ENCODE measurements at regions of chr1 and their contacts with region 1.

Region 1: DNA sequence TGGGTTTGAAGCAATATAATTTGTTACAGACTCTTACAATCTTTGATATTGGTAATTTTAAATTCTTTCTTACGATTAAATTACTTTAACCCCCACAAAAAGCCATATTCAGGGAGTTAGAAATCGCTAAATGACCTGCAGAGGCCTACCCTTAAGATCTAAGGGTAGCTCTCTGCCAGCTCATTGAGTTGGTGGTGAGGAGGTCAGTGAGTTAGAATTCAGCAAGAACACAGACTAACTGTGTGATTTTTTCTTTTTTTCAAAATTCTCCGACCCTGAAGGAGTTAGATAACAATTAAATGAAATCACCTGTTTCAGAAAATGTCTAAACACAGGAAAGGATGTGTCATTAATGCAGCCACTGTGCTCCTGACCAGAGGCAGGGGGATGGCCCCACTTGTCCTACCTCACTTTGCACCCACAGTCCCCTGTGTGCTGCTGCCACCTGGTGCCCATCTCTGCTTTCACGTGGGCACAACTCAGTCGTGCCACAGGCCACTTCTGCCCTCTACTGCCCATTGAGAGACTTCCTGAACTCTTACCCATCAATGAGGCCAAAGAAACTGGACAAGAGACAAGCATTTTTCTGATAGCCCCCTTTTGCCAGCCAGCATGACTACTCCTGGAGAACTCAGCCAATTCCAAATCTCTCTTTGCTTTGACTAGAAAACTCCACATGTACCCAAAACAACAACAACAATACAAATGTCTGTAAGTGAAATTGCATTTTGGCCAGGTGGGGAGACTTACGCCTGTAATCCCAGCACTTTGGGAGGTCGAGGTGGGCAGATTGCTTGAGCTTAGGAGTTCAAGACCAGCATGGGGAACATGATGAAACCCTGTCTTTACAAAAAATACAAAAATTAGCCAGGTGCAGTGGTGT is 8.4 kb downstream of the CFAP45 start:
- DNase-seq: peak; percentile 89
- H3K4me3 ChIP-seq: no peak overlapping the region
- H3K27ac ChIP-seq: no peak overlapping the region
- H3K4me1 ChIP-seq: no peaks in the 10 kb centered on the region
- H3K27me3 ChIP-seq: no peaks in the 10 kb centered on the region
- CTCF ChIP-seq: peak; percentile 93

Region 2: DNA sequence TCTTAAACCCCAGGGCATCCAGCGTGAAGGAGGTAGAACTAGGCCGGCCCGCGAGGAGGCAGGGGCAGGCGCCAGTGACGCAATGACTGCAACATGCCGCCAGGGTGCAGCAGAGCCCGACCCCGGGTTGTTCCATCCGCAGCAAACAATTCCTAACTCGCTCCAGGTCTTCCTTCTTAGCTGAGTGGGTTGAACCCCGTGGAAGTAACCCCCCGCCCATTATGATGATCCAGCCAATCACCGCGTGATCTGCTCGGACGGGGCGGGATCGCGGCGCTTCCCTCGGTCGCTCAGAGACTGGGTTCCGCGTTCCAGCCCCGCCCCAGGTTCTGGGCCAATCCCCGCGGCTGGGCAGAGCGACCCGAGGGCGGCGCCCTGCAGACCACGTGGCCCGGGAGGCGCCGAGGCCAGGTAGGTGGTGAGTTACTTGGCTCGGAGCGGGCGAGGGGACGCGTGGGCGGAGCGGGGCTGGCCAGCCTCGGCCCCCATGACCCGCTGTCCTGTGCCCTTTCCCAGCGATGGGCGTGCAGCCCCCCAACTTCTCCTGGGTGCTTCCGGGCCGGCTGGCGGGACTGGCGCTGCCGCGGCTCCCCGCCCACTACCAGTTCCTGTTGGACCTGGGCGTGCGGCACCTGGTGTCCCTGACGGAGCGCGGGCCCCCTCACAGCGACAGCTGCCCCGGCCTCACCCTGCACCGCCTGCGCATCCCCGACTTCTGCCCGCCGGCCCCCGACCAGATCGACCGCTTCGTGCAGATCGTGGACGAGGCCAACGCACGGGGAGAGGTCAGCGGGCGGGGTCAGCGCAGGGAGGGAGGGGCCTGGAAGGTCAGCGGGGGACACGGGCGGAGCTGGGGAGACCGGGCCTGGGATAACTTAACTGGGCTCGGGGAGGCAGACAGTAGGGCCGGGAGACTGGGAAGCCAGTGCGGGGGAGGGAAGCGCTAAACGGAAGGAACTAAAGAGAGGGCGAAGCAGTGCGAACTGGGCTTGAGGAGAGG is 110.6 kb before region 1 on chr1 and contains the start of gene DUSP23:
- intact Hi-C with region 1: loop called (anchors 5 kb)
- DNase-seq: peak; percentile 98
- H3K4me3 ChIP-seq: peak within 1 kb of the TSS; percentile 95
- H3K27ac ChIP-seq: peak within 1 kb of the TSS; percentile 77
- H3K4me1 ChIP-seq: peaks cover 4% of the 10 kb centered on the region
- H3K27me3 ChIP-seq: no peaks in the 10 kb centered on the region
- CTCF ChIP-seq: peak; percentile 89
- total RNA-seq, gene DUSP23: 43.3 to 50.4 TPM

Region 3: DNA sequence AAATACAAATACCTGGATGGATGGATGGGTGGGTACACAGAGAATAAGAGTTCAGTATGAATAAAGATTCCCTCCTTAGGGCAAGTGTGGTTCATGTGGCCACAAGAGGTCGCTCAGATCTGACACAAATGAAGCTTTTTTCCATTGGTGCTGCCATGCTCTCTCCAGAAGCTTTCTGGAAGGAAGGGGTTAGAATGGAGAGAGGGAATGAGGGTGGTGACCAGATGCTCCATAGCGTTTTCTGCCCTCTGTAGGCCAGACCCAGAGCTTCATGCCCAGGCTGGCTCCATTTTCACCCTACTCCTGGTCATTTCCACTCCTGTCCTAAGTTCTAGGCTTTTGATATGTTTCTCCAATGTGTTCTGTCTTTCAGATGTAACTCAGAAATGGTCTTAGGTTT is 92.6 kb before region 1 on chr1:
- intact Hi-C with region 1: loop called (anchors 1 kb)
- DNase-seq: peak; percentile 73
- H3K4me3 ChIP-seq: no peak overlapping the region
- H3K27ac ChIP-seq: no peak overlapping the region
- H3K4me1 ChIP-seq: no peaks in the 10 kb centered on the region
- H3K27me3 ChIP-seq: peaks cover 1% of the 10 kb centered on the region
- CTCF ChIP-seq: peak; percentile 74

Region 4: GRCh38 chr1:159936273-159936904 is 44.9 kb after region 1 on chr1:
- intact Hi-C with region 1: loop called (anchors 5 kb)
- DNase-seq: peak; percentile 94
- H3K4me3 ChIP-seq: no peak overlapping the region
- H3K27ac ChIP-seq: no peak overlapping the region
- H3K4me1 ChIP-seq: peaks cover 32% of the 10 kb centered on the region
- H3K27me3 ChIP-seq: no peaks in the 10 kb centered on the region
- CTCF ChIP-seq: peak; percentile 97

Region 5: DNA sequence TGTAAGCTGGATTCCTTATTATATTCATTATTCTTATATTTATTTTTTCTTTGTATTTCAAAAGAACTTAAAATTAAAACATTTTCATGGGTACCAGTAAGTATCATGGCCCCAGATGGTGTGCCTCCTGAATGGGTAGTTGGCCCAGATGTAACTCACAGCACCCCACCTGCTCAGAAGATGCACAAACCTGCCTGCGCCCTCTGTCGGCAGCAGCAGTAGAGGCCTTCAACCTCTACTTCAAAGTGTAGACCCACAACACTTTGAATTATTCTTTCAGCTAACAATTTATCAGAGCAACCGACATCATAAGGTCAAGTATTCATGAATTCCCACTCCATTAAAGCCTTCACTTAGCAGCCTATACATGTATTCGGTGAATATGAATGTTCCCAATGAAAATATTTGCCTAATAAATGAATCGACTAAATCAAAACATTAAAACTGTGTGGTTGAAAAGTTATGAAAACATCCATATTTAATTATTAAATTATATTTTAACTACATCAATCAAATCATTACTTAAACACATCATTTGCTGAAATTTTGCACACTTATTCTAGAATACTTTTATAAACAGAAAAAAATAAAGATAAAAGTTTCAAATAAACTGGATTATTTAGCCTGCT is 114.9 kb after region 1 on chr1:
- intact Hi-C with region 1: loop called (anchors 5 kb)
- DNase-seq: peak; percentile 80
- H3K4me3 ChIP-seq: no peak overlapping the region
- H3K27ac ChIP-seq: no peak overlapping the region
- H3K4me1 ChIP-seq: no peaks in the 10 kb centered on the region
- H3K27me3 ChIP-seq: no peaks in the 10 kb centered on the region
- CTCF ChIP-seq: peak; percentile 82